OCI-LY7 (cell line): ENCODE measurements at regions of chr1 and their contacts with region 1.

Region 1: GRCh38 chr1:172745014-172745413 is 86.1 kb downstream of the FASLG start:
- DNase-seq: peak; percentile 85
- H3K4me3 ChIP-seq: no peak overlapping the region
- H3K27ac ChIP-seq: no peak overlapping the region
- H3K4me1 ChIP-seq: peaks cover 34% of the 10 kb centered on the region
- CTCF ChIP-seq: peak; percentile 92

Region 2: GRCh38 chr1:172380441-172381244 is 364.4 kb before region 1 on chr1:
- CTCF ChIA-PET with region 1: no interaction called
- POLR2A ChIA-PET with region 1: no interaction called
- intact Hi-C with region 1: no loop called
- DNase-seq: peak; percentile 78
- H3K4me3 ChIP-seq: peak overlapping the region; percentile 54
- H3K27ac ChIP-seq: peak overlapping the region; percentile 72
- H3K4me1 ChIP-seq: peaks cover 37% of the 10 kb centered on the region
- CTCF ChIP-seq: 0 out of 2 replicates have a peak, but pooled peaks have one; percentile 23

Region 3: GRCh38 chr1:172818841-172819527 is 74.0 kb after region 1 on chr1:
- CTCF ChIA-PET with region 1: interaction called, 3 read pairs
- POLR2A ChIA-PET with region 1: interaction called, 7 read pairs
- intact Hi-C with region 1: loop called (anchors 1 kb)
- DNase-seq: peak; percentile 91
- H3K4me3 ChIP-seq: peak overlapping the region; percentile 59
- H3K27ac ChIP-seq: peak overlapping the region; percentile 88
- H3K4me1 ChIP-seq: peaks cover 53% of the 10 kb centered on the region
- CTCF ChIP-seq: no peak

Region 4: GRCh38 chr1:172903581-172904220 is 158.7 kb after region 1 on chr1:
- CTCF ChIA-PET with region 1: no interaction called
- POLR2A ChIA-PET with region 1: no interaction called
- intact Hi-C with region 1: loop called (anchors 2 kb)
- DNase-seq: no peak
- H3K4me3 ChIP-seq: no peak overlapping the region
- H3K27ac ChIP-seq: no peak overlapping the region
- H3K4me1 ChIP-seq: peaks cover 17% of the 10 kb centered on the region
- CTCF ChIP-seq: no peak

Region 5: GRCh38 chr1:173202430-173203145 is 457.6 kb after region 1 on chr1:
- CTCF ChIA-PET with region 1: interaction called, 5 read pairs
- POLR2A ChIA-PET with region 1: interaction called, 4 read pairs
- intact Hi-C with region 1: loop called (anchors 1 kb)
- DNase-seq: peak; percentile 63
- H3K4me3 ChIP-seq: no peak overlapping the region
- H3K27ac ChIP-seq: no peak overlapping the region
- H3K4me1 ChIP-seq: no peaks in the 10 kb centered on the region
- CTCF ChIP-seq: peak; percentile 84

Region 6: GRCh38 chr1:173682176-173682575 is 937.2 kb after region 1 on chr1:
- CTCF ChIA-PET with region 1: no interaction called
- POLR2A ChIA-PET with region 1: no interaction called
- intact Hi-C with region 1: loop called (anchors 10 kb)
- DNase-seq: no peak
- H3K4me3 ChIP-seq: no peak overlapping the region
- H3K27ac ChIP-seq: no peak overlapping the region
- H3K4me1 ChIP-seq: no peaks in the 10 kb centered on the region
- CTCF ChIP-seq: no peak

Region 7: DNA sequence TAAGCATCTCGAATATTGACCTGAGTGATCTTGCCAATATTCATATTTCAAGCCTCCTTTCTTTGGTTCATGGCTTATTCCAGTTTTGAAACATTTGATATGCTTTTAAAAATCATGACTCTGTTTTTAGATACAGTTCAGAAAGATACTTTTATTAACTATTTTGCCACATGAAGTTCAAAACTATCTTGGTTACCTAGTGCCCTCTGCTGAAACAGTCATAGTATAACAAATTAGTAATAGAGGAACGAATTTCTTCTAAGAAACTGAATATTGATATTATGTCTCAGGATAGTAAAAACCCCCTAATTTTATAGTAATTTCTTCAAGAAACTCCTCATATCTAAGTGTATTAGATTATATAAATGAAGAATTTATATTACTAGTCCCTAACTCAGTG is 1329.7 kb after region 1 on chr1:
- CTCF ChIA-PET with region 1: no interaction called
- POLR2A ChIA-PET with region 1: no interaction called
- intact Hi-C with region 1: loop called (anchors 10 kb)
- DNase-seq: peak; percentile 36
- H3K4me3 ChIP-seq: no peak overlapping the region
- H3K27ac ChIP-seq: no peak overlapping the region
- H3K4me1 ChIP-seq: no peaks in the 10 kb centered on the region
- CTCF ChIP-seq: peak; percentile 85